PC-3 (cell line): ENCODE measurements at regions of chr18 and their contacts with region 1.

Region 1: DNA sequence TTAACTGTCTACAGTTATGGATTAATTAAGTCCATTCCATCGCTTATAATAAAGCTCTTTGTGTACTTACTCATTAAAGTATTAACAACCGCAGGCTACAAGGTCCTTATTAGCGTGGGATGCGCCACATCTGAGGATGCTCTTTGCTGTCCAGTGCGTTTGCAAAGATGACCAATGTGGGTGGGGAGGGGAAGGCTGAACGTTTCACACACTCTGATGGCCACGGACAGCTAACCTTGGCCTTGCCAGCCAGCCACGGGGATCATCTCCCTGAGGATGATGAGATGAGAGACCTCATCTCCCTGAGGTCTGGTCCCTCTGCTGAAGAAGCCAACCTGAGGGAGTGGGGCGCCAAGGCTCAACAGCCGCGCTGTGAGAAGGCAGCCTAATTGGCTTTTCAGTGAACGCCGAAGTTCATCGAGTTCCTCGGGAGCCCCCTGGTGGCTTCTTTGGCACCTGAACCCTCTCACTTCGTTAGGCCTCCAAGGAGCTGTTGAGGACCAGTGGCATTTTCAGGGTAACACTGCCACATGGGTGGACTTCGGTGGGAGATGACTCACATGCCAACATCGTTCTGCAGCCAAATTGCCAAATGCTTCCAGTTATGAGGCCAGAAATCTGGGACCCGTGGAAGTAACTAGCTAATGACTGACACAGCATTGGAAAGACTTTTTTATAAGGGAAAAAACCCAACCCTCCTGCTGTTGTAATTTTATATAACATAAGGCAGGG is 69.3 kb upstream of the SEC11C start:
- DNase-seq: peak; percentile 91
- ATAC-seq: peak; percentile 67
- H3K4me3 ChIP-seq: no peak overlapping the region
- H3K27ac ChIP-seq: no peak overlapping the region
- H3K4me1 ChIP-seq: peaks cover 27% of the 10 kb centered on the region
- H3K27me3 ChIP-seq: no peaks in the 10 kb centered on the region
- CTCF ChIP-seq: peak; percentile 94

Region 2: GRCh38 chr18:58661423-58661822 is 408.9 kb before region 1 on chr18:
- CTCF ChIA-PET with region 1: no interaction called
- POLR2A ChIA-PET with region 1: no interaction called
- intact Hi-C with region 1: no loop called
- DNase-seq: peak; percentile 20
- ATAC-seq: peak; percentile 46
- H3K4me3 ChIP-seq: no peak overlapping the region
- H3K27ac ChIP-seq: no peak overlapping the region
- H3K4me1 ChIP-seq: peaks cover 13% of the 10 kb centered on the region
- H3K27me3 ChIP-seq: no peaks in the 10 kb centered on the region
- CTCF ChIP-seq: no peak

Region 3: DNA sequence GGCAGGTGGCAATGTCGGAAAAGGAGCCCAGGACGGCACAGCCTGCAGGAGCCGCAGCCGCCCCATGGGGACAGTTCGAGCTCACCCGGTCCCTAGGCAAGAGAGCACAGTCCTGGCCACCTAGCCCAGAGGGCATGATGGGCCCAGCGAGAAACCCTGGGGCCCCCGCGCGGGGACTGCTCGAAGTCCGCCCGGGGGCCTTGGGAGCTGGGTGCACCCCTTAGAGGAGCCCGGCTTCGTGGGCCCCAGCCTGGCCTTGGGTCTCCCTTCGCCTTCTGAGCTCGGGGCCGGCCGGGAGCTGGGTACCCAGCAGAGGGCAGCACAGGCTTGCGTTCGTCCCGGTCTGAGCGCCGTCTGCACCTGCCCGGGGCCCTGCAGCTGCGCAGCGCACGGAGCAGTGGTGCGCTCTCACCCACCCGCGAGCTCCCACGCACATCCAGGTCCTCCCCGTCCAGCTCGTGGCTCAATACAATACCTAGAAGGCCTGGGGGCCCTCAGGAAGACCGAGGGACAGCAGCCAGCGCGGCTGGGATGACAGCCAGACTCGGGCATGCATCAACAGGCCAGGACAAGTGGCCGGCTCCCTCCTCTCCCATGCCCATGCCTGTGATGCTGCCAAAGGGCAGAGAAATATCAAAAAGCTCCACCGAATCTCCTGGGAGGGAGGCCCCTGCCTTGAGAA is 301.9 kb before region 1 on chr18:
- CTCF ChIA-PET with region 1: interaction called, 39 read pairs
- POLR2A ChIA-PET with region 1: no interaction called
- intact Hi-C with region 1: loop called (anchors 1 kb)
- DNase-seq: peak; percentile 74
- ATAC-seq: peak; percentile 98
- H3K4me3 ChIP-seq: peak overlapping the region; percentile 67
- H3K27ac ChIP-seq: no peak overlapping the region
- H3K4me1 ChIP-seq: 0 out of 2 replicates have a peak, but pooled peaks cover 3% of the 10 kb centered on the region
- H3K27me3 ChIP-seq: no peaks in the 10 kb centered on the region
- CTCF ChIP-seq: peak; percentile 87

Region 4: GRCh38 chr18:58864146-58865032 is 206.0 kb before region 1 on chr18 and contains the start of gene ZNF532:
- CTCF ChIA-PET with region 1: no interaction called
- POLR2A ChIA-PET with region 1: no interaction called
- intact Hi-C with region 1: loop called (anchors 2 kb)
- DNase-seq: peak; percentile 68
- ATAC-seq: peak; percentile 53
- H3K4me3 ChIP-seq: peak within 1 kb of the TSS; percentile 62
- H3K27ac ChIP-seq: peak within 1 kb of the TSS; percentile 87
- H3K4me1 ChIP-seq: peaks cover 71% of the 10 kb centered on the region
- H3K27me3 ChIP-seq: no peaks in the 10 kb centered on the region
- CTCF ChIP-seq: no peak
- total RNA-seq, gene ZNF532: 47.3 and 62.6 TPM in 2 replicates

Region 5: GRCh38 chr18:58947136-58947732 is 123.1 kb before region 1 on chr18:
- CTCF ChIA-PET with region 1: interaction called, 5 read pairs
- POLR2A ChIA-PET with region 1: no interaction called
- intact Hi-C with region 1: loop called (anchors 5 kb)
- DNase-seq: no peak
- ATAC-seq: no peak
- H3K4me3 ChIP-seq: no peak overlapping the region
- H3K27ac ChIP-seq: no peak overlapping the region
- H3K4me1 ChIP-seq: peaks cover 7% of the 10 kb centered on the region
- H3K27me3 ChIP-seq: no peaks in the 10 kb centered on the region
- CTCF ChIP-seq: no peak

Region 6: DNA sequence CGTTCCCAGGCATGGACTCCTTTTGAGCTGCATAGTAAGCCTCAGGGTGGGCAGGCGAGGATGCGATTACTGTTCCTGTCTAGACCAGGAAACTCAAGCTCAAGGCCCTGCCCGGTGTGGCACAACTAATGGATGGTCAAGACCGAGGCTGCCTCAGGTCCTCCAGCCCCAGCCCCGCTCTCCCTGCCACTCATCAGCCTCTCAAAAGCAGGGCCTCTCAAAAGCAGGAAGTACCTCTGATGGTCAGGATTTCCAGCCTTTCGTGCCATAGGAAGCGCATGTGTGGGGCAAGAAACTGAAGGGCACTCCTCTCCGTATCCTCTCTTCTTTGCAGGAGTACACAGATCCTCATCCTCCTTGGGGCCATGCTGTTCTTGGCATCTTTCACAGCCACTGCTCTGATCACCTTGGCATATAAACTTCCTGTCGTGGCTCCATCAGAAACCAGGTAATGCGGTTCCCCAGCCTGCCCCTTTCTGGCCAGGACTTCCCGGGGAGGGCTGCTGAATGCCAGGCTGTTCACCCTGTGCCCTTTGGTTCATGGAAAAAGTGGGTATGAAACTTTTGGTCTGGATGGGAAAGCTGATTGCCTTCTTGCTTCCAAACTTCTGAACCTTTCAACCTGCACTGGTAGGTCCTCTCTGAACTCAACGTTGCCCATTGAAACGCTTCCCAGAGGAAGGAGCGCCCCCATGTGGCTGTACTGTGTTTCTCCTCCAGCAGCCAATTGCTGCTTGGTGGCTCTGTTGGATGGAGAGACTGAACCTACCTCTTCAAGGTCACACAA is 13.4 kb before region 1 on chr18:
- CTCF ChIA-PET with region 1: no interaction called
- POLR2A ChIA-PET with region 1: no interaction called
- intact Hi-C with region 1: loop called (anchors 1 kb)
- DNase-seq: peak; percentile 77
- ATAC-seq: peak; percentile 45
- H3K4me3 ChIP-seq: no peak overlapping the region
- H3K27ac ChIP-seq: no peak overlapping the region
- H3K4me1 ChIP-seq: peaks cover 49% of the 10 kb centered on the region
- H3K27me3 ChIP-seq: no peaks in the 10 kb centered on the region
- CTCF ChIP-seq: peak; percentile 89